Body of pancreas (tissue), 4 donors: ENCODE measurements at regions of chr10 and their contacts with region 1.

Region 1: GRCh38 chr10:124389613-124390361 is 28.9 kb downstream of the OAT start:
- DNase-seq: peak in 1 of 4 donors; percentile 20
- ATAC-seq: no peak
- H3K4me3 ChIP-seq: no peak overlapping the region
- H3K27ac ChIP-seq: no peak overlapping the region
- H3K4me1 ChIP-seq: peaks cover 12% of the 10 kb centered on the region
- H3K27me3 ChIP-seq: no peaks in the 10 kb centered on the region
- CTCF ChIP-seq: no peak
- POLR2A ChIP-seq: no peak

Region 2: GRCh38 chr10:123994417-123995081 is 395.2 kb before region 1 on chr10:
- intact Hi-C with region 1: loop called (anchors 5 kb)
- DNase-seq: peak; percentile 85 to 89 (median 88)
- ATAC-seq: peak; percentile 82
- H3K4me3 ChIP-seq: no peak overlapping the region
- H3K27ac ChIP-seq: no peak overlapping the region
- H3K4me1 ChIP-seq: peaks cover 21% of the 10 kb centered on the region
- H3K27me3 ChIP-seq: peaks cover 0 to 35% of the 10 kb centered on the region in 2 donors
- CTCF ChIP-seq: peak; percentile 94 to 98 (median 97)
- POLR2A ChIP-seq: no peak